ENCODE measurements at regions of chr5 and their contacts with region 1.

Region 1: DNA sequence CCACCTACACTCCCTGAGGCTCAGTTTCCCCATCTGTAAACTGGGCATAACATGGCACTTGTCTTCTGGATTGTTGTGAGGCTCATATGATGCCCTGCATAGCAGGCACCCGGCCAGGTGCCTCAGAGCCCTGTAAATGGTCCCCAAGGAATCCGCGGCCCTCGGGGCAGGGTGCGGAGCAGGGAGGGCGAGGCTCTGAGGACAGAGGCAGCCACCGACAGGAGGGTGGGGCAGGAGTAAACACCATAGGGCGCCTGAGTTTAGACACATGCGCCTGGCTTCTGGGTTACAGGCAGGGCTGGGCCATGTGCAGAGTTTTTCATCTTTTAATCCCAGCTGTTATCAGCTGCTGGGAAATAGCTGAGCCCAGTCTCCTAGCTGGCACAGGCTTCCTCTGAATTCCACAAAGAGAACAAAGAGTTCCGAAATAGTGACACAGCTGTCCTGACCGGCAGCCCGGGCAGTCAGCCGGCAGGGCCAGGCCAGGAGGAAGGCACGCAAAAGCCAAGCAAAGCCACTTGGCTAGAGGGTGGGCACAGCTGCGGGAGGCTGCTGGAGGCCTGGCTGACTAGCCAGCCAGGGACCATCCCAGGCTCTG is 98.9 kb upstream of the PHYKPL start:
- DNase-seq: peak; percentile 90 to 92
- ATAC-seq: peak; percentile 92 to 93
- H3K4me3 ChIP-seq: no peak overlapping the region
- H3K27ac ChIP-seq: peak overlapping the region; percentile 84 to 91 (median 86)
- H3K4me1 ChIP-seq: peaks cover 20 to 26% of the 10 kb centered on the region in 2 donors
- H3K27me3 ChIP-seq: no peaks in the 10 kb centered on the region
- CTCF ChIP-seq: no peak
- POLR2A ChIP-seq: peak; percentile 3 to 26

Region 2: GRCh38 chr5:178312880-178313282 is 18.6 kb before region 1 on chr5:
- in situ Hi-C with region 1: no loop called
- intact Hi-C with region 1: no loop called
- DNase-seq: no peak
- ATAC-seq: no peak
- H3K4me3 ChIP-seq: no peak overlapping the region
- H3K27ac ChIP-seq: no peak overlapping the region
- H3K4me1 ChIP-seq: no peaks in the 10 kb centered on the region
- H3K27me3 ChIP-seq: no peaks in the 10 kb centered on the region
- CTCF ChIP-seq: no peak
- POLR2A ChIP-seq: no peak

Region 3: GRCh38 chr5:178396796-178397720 is 65.6 kb after region 1 on chr5:
- in situ Hi-C with region 1: no loop called
- intact Hi-C with region 1: loop called (anchors 2 kb)
- DNase-seq: peak; percentile 76 to 88
- ATAC-seq: peak; percentile 94 to 98
- H3K4me3 ChIP-seq: peak overlapping the region in 2 of 4 donors; percentile 3 to 14
- H3K27ac ChIP-seq: peak overlapping the region; percentile 65 to 76 (median 70)
- H3K4me1 ChIP-seq: peaks cover 0 to 11% of the 10 kb centered on the region in 2 donors
- H3K27me3 ChIP-seq: peaks cover 0 to 7% (median 0%) of the 10 kb centered on the region in 3 donors
- CTCF ChIP-seq: no peak
- POLR2A ChIP-seq: peak; percentile 23 to 46

Region 4: DNA sequence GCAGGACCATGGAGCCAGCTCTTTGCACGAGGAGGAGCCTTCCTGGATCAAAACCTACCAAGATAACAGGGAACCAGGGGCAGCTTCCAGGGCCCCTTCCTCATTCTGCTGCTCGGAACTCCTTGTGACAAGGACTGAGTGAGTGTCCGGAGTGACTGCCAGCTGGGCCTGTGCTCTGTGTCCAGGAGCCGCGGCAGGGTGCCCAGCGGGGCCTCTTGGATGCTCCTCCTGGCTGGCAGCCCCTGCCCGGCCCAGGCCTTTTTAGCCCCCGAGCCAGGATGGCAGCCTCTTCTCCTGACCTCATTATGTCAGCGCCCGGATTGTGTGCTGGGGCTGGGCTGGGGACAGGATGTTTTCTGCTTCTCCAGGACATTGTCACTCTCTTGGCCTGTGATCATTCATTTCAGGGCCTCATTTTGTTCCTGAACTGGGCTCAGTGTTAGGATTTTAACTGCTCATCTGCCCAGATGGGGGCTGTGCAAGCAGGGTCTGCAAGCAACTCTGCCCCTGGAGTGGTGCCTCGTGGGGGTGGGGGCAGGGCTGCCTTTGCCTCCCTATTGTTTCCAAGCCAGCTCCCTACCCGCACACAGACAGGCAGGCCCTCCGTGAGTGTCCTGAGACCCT is 97.0 kb after region 1 on chr5:
- in situ Hi-C with region 1: no loop called
- intact Hi-C with region 1: loop called (anchors 2 kb)
- DNase-seq: peak; percentile 90 to 94
- ATAC-seq: peak; percentile 87 to 90
- H3K4me3 ChIP-seq: no peak overlapping the region
- H3K27ac ChIP-seq: peak overlapping the region; percentile 87 to 98 (median 92)
- H3K4me1 ChIP-seq: peaks cover 19 to 28% of the 10 kb centered on the region in 2 donors
- H3K27me3 ChIP-seq: no peaks in the 10 kb centered on the region
- CTCF ChIP-seq: no peak
- POLR2A ChIP-seq: peak; percentile 23 to 39

Region 5: DNA sequence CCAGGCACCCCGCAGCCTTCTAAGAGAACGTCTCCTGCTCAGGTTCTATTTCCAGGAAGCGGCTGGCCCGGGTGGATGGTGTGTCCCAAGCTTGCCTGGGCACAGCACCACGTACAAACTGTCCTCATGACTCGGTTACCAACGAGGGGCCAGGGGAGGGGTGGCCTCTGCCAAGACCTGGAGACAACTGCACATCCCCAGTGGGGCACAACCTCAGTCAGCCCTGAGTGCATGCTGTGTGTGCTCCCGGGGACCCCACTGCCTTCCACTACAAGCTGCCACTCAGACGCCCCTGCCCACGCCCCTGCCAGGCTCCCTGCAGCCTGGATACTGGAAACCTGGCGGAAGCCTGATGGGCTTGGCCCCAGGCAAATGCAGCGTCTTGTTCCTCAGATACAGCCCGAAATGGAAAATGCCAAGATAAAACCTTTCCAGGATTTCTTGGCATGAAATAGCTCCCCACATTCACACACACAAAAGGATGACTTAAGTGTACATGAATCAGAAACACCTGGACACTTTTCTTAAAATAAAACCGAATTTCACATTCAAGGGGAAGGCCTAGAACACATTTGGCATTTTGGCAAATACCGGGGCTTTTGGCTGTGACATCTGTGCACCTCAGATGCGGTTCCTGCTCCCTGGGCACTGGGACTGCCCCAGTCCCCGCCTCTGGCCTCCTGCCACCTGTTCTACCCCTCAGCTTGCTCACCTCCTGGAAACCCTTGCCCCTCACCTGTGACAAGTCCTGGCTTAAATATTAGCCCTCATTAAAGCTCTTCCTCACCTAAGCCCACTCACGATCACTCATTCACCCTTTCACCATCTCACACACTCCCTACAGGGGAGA is 196.2 kb after region 1 on chr5:
- in situ Hi-C with region 1: no loop called
- intact Hi-C with region 1: loop called (anchors 5 kb)
- DNase-seq: peak; percentile 87 to 91
- ATAC-seq: peak; percentile 86 to 91
- H3K4me3 ChIP-seq: no peak overlapping the region
- H3K27ac ChIP-seq: peak overlapping the region; percentile 60 to 91 (median 76)
- H3K4me1 ChIP-seq: peaks cover 19 to 30% of the 10 kb centered on the region in 2 donors
- H3K27me3 ChIP-seq: no peaks in the 10 kb centered on the region
- CTCF ChIP-seq: no peak
- POLR2A ChIP-seq: no peak

Region 6: GRCh38 chr5:178590141-178590923 is 258.8 kb after region 1 on chr5 and contains the start of gene COL23A1:
- in situ Hi-C with region 1: no loop called
- intact Hi-C with region 1: loop called (anchors 1 kb)
- DNase-seq: peak; percentile 43 to 53
- ATAC-seq: peak; percentile 65
- H3K4me3 ChIP-seq: peak within 1 kb of the TSS; percentile 53 to 65 (median 58)
- H3K27ac ChIP-seq: peak within 1 kb of the TSS; percentile 70 to 86 (median 78)
- H3K4me1 ChIP-seq: peaks cover 9 to 23% of the 10 kb centered on the region in 2 donors
- H3K27me3 ChIP-seq: peaks cover 0 to 2% (median 0%) of the 10 kb centered on the region in 3 donors
- CTCF ChIP-seq: peak; percentile 42 to 73 (median 64)
- POLR2A ChIP-seq: peak; percentile 16 to 18
- total RNA-seq, gene COL23A1: 0.62 to 1.1 (median 0.97) TPM in 3 of 4 donors, not detected in the other